ENCODE measurements at regions of chr7 and their contacts with region 1.

Region 1: GRCh38 chr7:20219446-20220292 is 2.5 kb upstream of the MACC1 start:
- DNase-seq: peak; percentile 99
- ATAC-seq: peak; percentile 72
- H3K4me3 ChIP-seq: peak overlapping the region; percentile 44; the same call in 1 of the 2 replicates
- H3K27ac ChIP-seq: peak overlapping the region; percentile 98
- H3K4me1 ChIP-seq: peaks cover 35% of the 10 kb centered on the region
- H3K27me3 ChIP-seq: no peaks in the 10 kb centered on the region
- CTCF ChIP-seq: peak in 1 of 3 experiments; percentile 14; a peak in 1 of 6 replicates
- EP300 ChIP-seq: peak; percentile 99 to 100
- POLR2A ChIP-seq: peak; percentile 74
- RAD21 ChIP-seq: peak; percentile 19; the same call in 1 of the 2 replicates

Region 2: DNA sequence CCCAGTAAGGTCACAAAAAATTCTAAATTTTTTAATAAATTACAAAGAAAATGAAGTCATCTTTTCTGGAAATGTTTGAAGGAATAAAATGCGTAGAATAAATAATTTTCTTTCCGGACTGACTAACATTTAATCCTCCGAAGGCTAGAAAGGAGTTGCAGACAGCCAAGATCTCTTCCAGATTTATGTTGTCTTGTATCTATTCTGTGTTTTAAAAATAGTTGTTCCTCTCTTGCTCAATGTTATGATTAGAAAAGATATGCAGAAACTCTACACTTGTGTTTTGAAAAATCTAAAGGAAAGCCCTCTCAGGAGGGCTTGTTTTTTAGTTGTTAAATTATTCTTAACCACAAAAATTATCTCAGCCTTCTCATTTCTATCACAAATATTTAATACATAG is 73.2 kb before region 1 on chr7:
- CTCF ChIA-PET with region 1: no interaction called
- POLR2A ChIA-PET with region 1: no interaction called
- RAD21 ChIA-PET with region 1: no interaction called
- SMC1A ChIA-PET with region 1: no interaction called
- in situ Hi-C with region 1: no loop called
- intact Hi-C with region 1: no loop called
- DNase-seq: no peak
- ATAC-seq: no peak
- H3K4me3 ChIP-seq: no peak overlapping the region
- H3K27ac ChIP-seq: no peak overlapping the region
- H3K4me1 ChIP-seq: no peaks in the 10 kb centered on the region
- H3K27me3 ChIP-seq: no peaks in the 10 kb centered on the region
- CTCF ChIP-seq: no peak
- EP300 ChIP-seq: no peak
- POLR2A ChIP-seq: no peak
- RAD21 ChIP-seq: no peak

Region 3: GRCh38 chr7:20172736-20173334 is 46.8 kb before region 1 on chr7:
- CTCF ChIA-PET with region 1: interaction called, 11 read pairs
- POLR2A ChIA-PET with region 1: interaction called, 5 read pairs
- RAD21 ChIA-PET with region 1: interaction called, 7 read pairs
- SMC1A ChIA-PET with region 1: interaction called, 7 read pairs
- in situ Hi-C with region 1: no loop called
- intact Hi-C with region 1: no loop called
- DNase-seq: no peak
- ATAC-seq: peak; percentile 72
- H3K4me3 ChIP-seq: no peak overlapping the region
- H3K27ac ChIP-seq: no peak overlapping the region
- H3K4me1 ChIP-seq: no peaks in the 10 kb centered on the region
- H3K27me3 ChIP-seq: no peaks in the 10 kb centered on the region
- CTCF ChIP-seq: peak; percentile 47 to 51 (median 49); a peak in 5 of 6 replicates
- EP300 ChIP-seq: no peak
- POLR2A ChIP-seq: no peak
- RAD21 ChIP-seq: peak; percentile 70

Region 4: GRCh38 chr7:20199015-20199737 is 20.5 kb before region 1 on chr7:
- CTCF ChIA-PET with region 1: interaction called, 33 read pairs
- POLR2A ChIA-PET with region 1: interaction called, 49 read pairs
- RAD21 ChIA-PET with region 1: interaction called, 44 read pairs
- SMC1A ChIA-PET with region 1: interaction called, 123 read pairs
- in situ Hi-C with region 1: no loop called
- intact Hi-C with region 1: loop called (anchors 1 kb)
- DNase-seq: peak; percentile 94
- ATAC-seq: peak; percentile 77
- H3K4me3 ChIP-seq: no peak overlapping the region; the same call in 1 of the 2 replicates
- H3K27ac ChIP-seq: peak overlapping the region; percentile 3; the same call in 1 of the 2 replicates
- H3K4me1 ChIP-seq: peaks cover 25% of the 10 kb centered on the region
- H3K27me3 ChIP-seq: no peaks in the 10 kb centered on the region
- CTCF ChIP-seq: no peak
- EP300 ChIP-seq: peak in 1 of 2 experiments; percentile 32; a peak in 1 of 4 replicates
- POLR2A ChIP-seq: no peak
- RAD21 ChIP-seq: no peak

Region 5: GRCh38 chr7:20270867-20271266 is 51.2 kb after region 1 on chr7:
- CTCF ChIA-PET with region 1: interaction called, 8 read pairs
- POLR2A ChIA-PET with region 1: interaction called, 13 read pairs
- RAD21 ChIA-PET with region 1: interaction called, 13 read pairs
- SMC1A ChIA-PET with region 1: interaction called, 20 read pairs
- in situ Hi-C with region 1: no loop called
- intact Hi-C with region 1: loop called (anchors 2 kb)
- DNase-seq: peak; percentile 74
- ATAC-seq: peak; percentile 90
- H3K4me3 ChIP-seq: no peak overlapping the region
- H3K27ac ChIP-seq: peak overlapping the region; percentile 73
- H3K4me1 ChIP-seq: peaks cover 17% of the 10 kb centered on the region
- H3K27me3 ChIP-seq: no peaks in the 10 kb centered on the region
- CTCF ChIP-seq: no peak
- EP300 ChIP-seq: no peak
- POLR2A ChIP-seq: no peak
- RAD21 ChIP-seq: no peak

Region 6: DNA sequence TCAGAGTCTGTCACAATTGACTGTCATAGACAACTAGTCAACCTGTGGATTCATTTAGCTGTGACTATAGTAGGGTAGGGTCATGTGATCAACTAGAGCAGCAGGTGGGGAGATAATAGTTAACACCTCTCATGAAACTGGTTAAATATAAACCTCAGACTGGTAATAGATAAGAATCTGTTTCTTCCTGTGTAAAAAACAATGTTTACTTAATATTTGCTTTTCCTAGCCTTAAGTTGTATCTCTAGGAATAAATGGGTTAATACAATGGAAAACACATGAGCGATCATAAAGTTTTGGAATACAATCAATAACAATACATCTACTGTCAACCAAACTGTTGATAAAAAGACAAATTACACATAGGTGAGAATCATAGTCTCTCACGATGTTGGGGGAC is 67.6 kb after region 1 on chr7:
- CTCF ChIA-PET with region 1: interaction called, 9 read pairs
- POLR2A ChIA-PET with region 1: interaction called, 23 read pairs
- RAD21 ChIA-PET with region 1: interaction called, 45 read pairs
- SMC1A ChIA-PET with region 1: interaction called, 80 read pairs
- in situ Hi-C with region 1: loop called (anchors 5 kb)
- intact Hi-C with region 1: loop called (anchors 1 kb)
- DNase-seq: no peak
- ATAC-seq: peak; percentile 52
- H3K4me3 ChIP-seq: no peak overlapping the region
- H3K27ac ChIP-seq: no peak overlapping the region
- H3K4me1 ChIP-seq: peaks cover 19% of the 10 kb centered on the region
- H3K27me3 ChIP-seq: no peaks in the 10 kb centered on the region
- CTCF ChIP-seq: no peak
- EP300 ChIP-seq: peak; percentile 53 to 74; a peak in 3 of 4 replicates
- POLR2A ChIP-seq: no peak
- RAD21 ChIP-seq: no peak

Measured in GM12878 (cell line).